IMR-90 (cell line): ENCODE measurements at regions of chr16 and their contacts with region 1.

Region 1: DNA sequence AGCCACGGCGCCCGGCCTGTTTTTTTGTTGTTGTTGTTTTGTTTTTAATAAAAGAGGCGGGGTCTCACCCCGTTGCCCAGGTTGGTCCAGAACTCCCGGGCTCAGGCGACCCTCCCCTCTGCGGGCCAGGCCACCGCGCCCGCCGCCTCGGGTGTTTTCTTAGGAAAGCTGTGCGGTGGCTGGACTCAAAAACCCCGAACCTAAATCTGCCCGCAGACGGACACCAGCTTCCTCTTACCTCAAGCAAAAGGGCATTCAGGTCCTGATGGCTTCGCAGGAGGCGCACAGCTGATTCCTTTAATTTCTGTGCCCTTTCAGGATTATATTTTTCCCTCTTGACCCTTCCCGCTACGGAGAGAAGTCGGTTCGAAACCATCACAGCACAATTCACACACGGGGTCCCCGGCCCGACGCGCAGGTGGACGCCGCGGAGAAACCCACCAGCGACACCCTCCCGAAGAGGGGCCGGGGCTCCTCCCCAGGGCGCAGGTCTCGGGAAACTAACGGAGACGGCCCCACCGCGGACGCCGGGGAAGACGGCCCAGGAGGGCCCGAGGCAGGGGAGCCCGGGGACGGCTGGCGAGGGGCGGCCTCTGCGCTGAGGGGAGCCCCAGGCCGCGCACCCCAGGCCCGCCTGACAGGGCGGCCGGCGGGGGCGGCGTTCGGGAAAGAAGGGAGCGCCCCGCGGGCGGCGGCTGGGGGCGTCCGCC is 653 bp downstream of the FANCA start:
- DNase-seq: no peak
- ATAC-seq: peak; percentile 24
- H3K4me3 ChIP-seq: peak overlapping the region; percentile 88
- H3K27ac ChIP-seq: peak overlapping the region; percentile 3; the same call in 1 of the 2 replicates
- H3K4me1 ChIP-seq: peaks cover 4% of the 10 kb centered on the region
- H3K27me3 ChIP-seq: no peaks in the 10 kb centered on the region
- CTCF ChIP-seq: no peak
- POLR2A ChIP-seq: no peak
- RAD21 ChIP-seq: no peak

Region 2: DNA sequence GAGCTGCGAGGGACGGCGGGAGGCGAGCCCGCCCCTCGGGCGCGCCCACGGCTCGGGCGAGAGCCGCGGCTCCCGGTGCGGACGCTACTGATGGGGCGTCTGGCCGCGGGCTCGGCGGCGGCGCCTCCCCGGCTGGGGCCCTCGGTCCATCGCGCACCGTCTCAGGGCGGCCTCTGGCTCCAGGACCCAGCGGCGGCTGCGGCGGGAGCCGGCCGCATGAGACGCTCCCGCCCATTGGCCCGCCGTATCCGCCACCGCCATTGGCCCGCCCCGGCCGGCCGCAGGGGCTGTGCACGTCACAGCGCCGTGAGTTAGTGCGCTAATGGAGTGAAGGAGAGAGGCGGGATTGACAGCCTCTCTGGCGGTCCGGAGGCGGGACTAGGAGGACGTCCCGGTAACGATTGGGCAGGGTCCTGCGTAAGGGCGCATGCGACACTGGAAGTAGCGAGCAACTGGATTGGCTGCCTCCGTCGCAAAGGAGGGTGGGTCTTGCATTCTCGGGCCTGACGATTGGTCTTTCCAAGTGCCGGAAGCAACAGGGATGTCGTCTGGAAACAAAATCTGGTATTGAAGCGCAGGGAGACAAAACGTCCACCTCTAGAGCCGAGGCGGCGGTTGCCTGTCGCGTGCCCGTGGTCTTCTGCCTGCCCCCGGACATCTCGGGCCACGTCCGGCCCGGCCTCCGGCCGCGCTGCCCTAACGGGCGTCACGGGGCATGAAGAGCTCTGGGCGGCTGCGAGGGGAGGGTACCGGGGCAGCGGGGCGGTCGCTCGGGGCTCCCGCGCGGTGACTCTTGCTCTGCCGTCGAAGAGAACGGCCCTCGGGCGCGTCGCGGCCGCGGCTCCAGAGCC is 325.2 kb before region 1 on chr16 and contains the start of gene ANKRD11:
- CTCF ChIA-PET with region 1: no interaction called
- POLR2A ChIA-PET with region 1: no interaction called
- dilution Hi-C with region 1: no loop called
- in situ Hi-C with region 1: no loop called
- intact Hi-C with region 1: no loop called
- DNase-seq: peak; percentile 100
- ATAC-seq: peak; percentile 95
- H3K4me3 ChIP-seq: peak within 1 kb of the TSS; percentile 66
- H3K27ac ChIP-seq: peak within 1 kb of the TSS; percentile 88
- H3K4me1 ChIP-seq: peaks cover 13% of the 10 kb centered on the region
- H3K27me3 ChIP-seq: no peaks in the 10 kb centered on the region
- CTCF ChIP-seq: no peak
- POLR2A ChIP-seq: peak; percentile 95
- RAD21 ChIP-seq: no peak
- total RNA-seq, gene ANKRD11: 28.1 and 46.8 TPM in 2 replicates

Region 3: GRCh38 chr16:89720813-89721545 is 94.8 kb before region 1 on chr16 and contains the starts of genes VPS9D1 and ZNF276:
- CTCF ChIA-PET with region 1: no interaction called
- POLR2A ChIA-PET with region 1: no interaction called
- dilution Hi-C with region 1: no loop called
- in situ Hi-C with region 1: no loop called
- intact Hi-C with region 1: loop called (anchors 10 kb)
- DNase-seq: peak; percentile 69
- ATAC-seq: peak; percentile 74
- H3K4me3 ChIP-seq: peak within 1 kb of the TSS; percentile 94
- H3K27ac ChIP-seq: peak within 1 kb of the TSS; percentile 94
- H3K4me1 ChIP-seq: peaks cover 17% of the 10 kb centered on the region
- H3K27me3 ChIP-seq: no peaks in the 10 kb centered on the region
- CTCF ChIP-seq: no peak
- POLR2A ChIP-seq: peak; percentile 67
- RAD21 ChIP-seq: no peak
- total RNA-seq, gene VPS9D1: 1.8 and 1.9 TPM in 2 replicates
- total RNA-seq, gene ZNF276: 4.1 and 4.2 TPM in 2 replicates